Left cardiac atrium (tissue), 4 donors: ENCODE measurements at regions of chr15 and their contacts with region 1.

Region 1: GRCh38 chr15:43329960-43330779 is at the start of gene LCMT2:
- DNase-seq: peak; percentile 94
- ATAC-seq: peak; percentile 96 to 98
- total RNA-seq, gene LCMT2: 7.5 to 10.9 TPM

Region 2: GRCh38 chr15:42973114-42973513 is 357.1 kb before region 1 on chr15:
- intact Hi-C with region 1: no loop called
- DNase-seq: no peak
- ATAC-seq: no peak

Region 3: GRCh38 chr15:43370975-43371974 is 41.1 kb after region 1 on chr15 and contains the starts of genes TUBGCP4 and ZSCAN29:
- intact Hi-C with region 1: loop called in 1 of 2 experiments (anchors 5 kb)
- DNase-seq: peak; percentile 85
- ATAC-seq: peak; percentile 97 to 98
- total RNA-seq, gene TUBGCP4: 11.3 to 12.6 TPM
- total RNA-seq, gene ZSCAN29: 13.2 to 15.3 TPM

Region 4: GRCh38 chr15:43402255-43402654 is 72.1 kb after region 1 on chr15:
- intact Hi-C with region 1: no loop called
- DNase-seq: no peak
- ATAC-seq: no peak